Sigmoid colon (tissue), 7 donors: ENCODE measurements at regions of chr4 and their contacts with region 1.

Region 1: GRCh38 chr4:48963042-48963679 is 22.9 kb upstream of the CWH43 start:
- DNase-seq: peak; percentile 79
- H3K4me3 ChIP-seq: no peak overlapping the region
- H3K27ac ChIP-seq: no peak overlapping the region
- H3K4me1 ChIP-seq: no peaks in the 10 kb centered on the region
- H3K27me3 ChIP-seq: no peaks in the 10 kb centered on the region
- CTCF ChIP-seq: peak; percentile 79 to 96 (median 94)
- EP300 ChIP-seq: no peak
- POLR2A ChIP-seq: no peak

Region 2: DNA sequence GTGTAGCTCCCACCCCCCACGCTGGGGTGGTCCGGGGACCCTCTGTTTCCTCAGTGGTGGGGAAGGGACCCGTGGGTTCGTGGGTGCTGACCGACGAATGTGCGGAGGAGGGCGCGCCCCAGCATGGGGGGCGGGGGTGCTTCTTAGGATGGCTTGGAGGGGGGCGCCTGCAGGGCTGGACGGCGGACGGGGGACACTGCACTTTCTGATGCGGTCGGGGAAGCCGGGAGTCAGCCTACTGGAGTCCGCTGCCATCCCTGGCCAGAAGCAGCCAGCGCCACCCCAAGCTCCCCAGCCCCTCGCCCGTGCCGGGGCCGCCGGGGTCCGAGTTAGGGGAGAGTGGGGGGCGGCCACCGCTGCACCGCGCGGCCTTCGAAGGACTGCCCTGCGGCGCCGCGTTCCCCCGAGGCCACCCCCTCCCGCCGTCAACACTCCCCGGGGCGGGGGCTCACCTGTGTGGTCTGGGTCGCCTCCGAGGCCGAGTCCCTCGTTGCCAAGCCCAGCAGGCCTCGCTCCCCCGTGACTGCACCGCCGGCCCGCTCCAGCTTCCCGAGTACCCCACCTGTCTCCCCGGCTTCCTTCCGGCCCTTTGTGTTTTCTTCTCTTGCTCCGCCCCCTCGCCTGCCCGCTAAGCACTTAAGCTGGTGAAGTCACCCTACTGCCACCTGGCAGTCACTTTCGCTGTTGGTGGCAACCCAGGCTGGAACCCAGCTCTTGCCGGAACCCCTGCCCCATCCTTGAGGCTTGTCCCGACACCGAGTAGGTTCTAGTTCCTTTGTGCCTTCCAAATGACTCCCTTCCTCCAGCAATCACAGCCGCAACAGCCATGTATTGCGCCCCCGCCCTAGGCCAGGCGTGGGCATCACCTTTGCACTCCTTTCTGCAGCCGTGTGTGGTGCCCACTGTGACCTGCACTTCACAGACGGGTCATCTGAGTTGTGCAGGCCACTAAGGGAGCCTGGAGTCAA is 56.7 kb before region 1 on chr4 and contains the start of gene OCIAD2:
- intact Hi-C with region 1: loop called (anchors 5 kb)
- DNase-seq: peak; percentile 69
- H3K4me3 ChIP-seq: peak within 1 kb of the TSS; percentile 42 to 77 (median 67)
- H3K27ac ChIP-seq: peak within 1 kb of the TSS in 3 of 4 donors; percentile 34 to 56 (median 55)
- H3K4me1 ChIP-seq: peaks cover 0 to 27% (median 9%) of the 10 kb centered on the region in 4 donors
- H3K27me3 ChIP-seq: no peaks in the 10 kb centered on the region
- CTCF ChIP-seq: no peak
- EP300 ChIP-seq: no peak
- POLR2A ChIP-seq: no peak
- total RNA-seq, gene OCIAD2: 7.1 to 21.8 (median 11.4) TPM